ENCODE measurements at regions of chr13 and their contacts with region 1.

Region 1: DNA sequence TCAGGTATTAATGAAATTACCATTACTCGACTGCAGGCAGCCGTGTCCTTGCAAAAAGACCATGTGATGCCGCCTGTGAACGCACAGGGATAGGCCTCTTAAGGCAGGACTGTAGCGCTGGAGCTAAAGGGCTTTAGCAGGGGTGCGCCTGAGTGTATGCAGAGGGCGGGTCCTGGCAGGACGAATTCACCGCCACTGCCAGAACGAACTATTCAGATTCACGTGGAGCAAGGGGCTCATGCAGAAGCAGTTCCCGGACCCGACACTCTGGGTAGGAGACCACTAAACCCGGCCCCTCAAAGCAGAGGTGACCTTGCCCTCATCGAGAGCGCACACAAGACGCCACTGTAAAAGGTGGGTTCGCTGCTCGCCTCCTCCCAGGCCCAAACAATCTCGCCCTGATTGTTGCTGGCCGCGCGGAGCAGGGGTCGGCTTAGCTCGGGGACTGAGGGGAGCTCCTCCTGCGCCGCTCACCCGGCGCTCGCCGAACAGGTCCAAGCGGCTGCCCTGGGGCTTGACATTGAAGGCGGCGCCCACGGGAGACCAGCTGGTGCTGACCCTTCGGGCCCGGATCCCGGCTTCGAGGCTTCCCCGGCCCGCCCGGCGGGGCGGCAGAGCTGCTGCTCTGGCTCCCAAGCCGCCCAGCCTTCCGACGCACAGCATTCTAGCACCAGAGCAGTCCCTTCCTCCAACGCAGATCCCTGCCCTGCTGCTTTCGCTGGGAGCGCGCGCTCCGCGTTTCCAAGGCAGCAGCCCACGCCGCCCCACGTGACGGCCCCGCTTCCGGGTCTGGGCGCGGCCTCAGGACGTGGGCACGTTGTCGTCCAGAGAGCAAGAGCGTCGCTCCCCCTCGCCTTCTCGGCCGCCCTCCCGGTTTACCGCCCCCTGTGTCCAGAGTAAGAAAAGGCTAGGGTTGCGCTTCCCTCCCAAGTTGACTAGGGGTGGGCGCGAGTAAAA is at the start of gene MIPEP:
- DNase-seq: peak; percentile 60
- H3K4me3 ChIP-seq: peak within 1 kb of the TSS; percentile 89
- CTCF ChIP-seq: peak; percentile 95

Region 2: DNA sequence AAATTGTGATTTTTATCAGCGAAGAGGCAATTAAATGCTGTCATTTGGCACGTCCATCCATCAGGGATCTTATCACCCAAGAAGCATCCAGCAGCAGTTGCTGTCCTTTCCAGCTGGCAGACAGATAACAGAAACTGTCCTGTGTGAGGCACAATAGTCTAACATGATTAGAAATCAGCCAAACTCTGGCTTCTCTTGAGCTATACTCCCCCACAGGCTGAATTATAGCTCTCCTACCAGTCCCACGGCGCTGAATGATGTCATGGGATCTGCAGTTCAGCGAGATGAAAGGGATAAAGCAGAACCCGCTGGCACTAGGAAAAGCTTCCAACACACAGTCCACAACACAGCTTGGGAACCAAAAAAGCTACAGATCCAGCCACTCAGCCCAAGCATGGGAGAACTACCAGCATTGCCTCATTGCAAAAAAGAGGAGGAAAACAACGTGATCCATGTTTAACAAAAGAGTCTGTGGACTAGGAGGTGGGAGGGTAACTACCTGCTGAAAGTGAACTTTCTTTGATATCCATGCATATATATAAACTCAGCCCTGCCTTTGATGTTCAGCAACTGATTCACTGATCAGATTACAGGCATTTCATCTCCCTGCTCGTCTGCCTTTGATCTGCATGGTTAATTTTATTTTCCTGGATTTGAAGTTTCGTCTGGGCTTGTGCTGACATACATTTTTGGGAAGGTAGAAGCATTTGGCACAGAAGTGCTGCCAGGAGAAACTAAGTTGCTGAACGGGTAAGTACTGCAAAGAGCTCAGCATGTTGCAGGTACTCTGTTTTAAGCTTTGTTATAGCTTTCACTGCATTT is 318.6 kb before region 1 on chr13 and contains the start of gene TNFRSF19:
- CTCF ChIA-PET with region 1: interaction called, 12 read pairs
- POLR2A ChIA-PET with region 1: no interaction called
- DNase-seq: peak; percentile 64
- H3K4me3 ChIP-seq: peak within 1 kb of the TSS; percentile 63
- CTCF ChIP-seq: no peak

Region 3: DNA sequence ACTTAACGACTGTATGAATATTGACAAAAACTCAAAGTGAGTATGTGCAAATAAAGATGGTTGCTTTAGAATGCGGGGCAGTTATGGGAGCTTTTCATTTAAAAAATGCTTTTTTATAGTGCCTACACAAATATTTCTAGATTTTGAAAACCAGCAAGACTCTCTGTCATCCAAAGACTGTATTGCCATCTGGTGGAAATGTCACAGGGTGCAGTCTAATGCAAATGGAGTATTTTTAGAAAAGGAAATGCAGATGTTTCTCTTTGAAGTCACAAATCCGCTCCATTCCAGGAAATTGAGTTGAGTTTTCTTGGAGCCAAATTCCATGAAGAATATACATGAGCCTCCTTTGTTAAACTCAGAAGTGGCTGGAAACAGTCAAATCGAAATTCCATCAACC is 10.6 kb after region 1 on chr13:
- CTCF ChIA-PET with region 1: interaction called, 66 read pairs
- POLR2A ChIA-PET with region 1: no interaction called
- DNase-seq: no peak
- H3K4me3 ChIP-seq: no peak overlapping the region
- CTCF ChIP-seq: peak; percentile 33

Region 4: DNA sequence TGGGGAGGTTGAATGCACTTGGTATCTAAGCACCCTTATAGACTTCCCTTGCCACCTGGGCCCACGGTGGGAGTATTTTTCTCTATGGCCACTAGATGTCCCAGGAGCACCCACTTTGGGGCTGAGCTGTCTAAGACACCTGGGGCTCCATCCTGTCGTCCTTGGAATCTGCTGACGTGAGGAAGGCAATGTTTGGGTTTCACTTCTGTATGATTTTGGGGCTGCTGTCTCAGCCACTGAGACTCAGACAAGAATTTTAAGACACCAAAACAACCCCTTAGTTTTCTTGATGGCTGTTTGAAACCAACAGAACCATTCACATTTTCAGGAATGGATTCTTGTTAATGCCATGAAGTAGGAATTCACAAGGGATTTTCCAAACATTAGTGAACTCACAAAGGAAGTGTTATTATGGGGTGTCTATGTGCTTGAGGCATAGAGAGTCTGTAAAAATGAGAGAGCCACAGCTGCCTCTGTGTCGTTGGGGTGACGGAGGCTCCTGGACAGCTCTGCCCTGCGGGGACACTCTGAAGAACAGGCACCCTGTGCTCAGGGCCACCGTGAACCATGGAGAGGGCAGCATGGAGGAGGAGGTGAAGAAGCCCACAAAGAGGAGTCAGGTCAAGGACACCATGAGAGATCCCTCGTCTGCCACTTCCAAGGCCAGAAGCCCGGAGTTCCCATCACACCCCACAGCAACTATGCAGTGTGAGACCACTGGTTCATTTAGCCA is 164.7 kb after region 1 on chr13:
- CTCF ChIA-PET with region 1: no interaction called
- POLR2A ChIA-PET with region 1: no interaction called
- DNase-seq: no peak
- H3K4me3 ChIP-seq: no peak overlapping the region
- CTCF ChIP-seq: peak; percentile 74

Region 5: GRCh38 chr13:24323036-24323738 is 434.3 kb after region 1 on chr13:
- CTCF ChIA-PET with region 1: interaction called, 15 read pairs
- POLR2A ChIA-PET with region 1: no interaction called
- DNase-seq: no peak
- H3K4me3 ChIP-seq: no peak overlapping the region
- CTCF ChIP-seq: no peak

Measured in AG04449 (cell line).